ENCODE measurements at regions of chrX and their contacts with region 1.

Region 1: GRCh38 chrX:108224727-108225621 is 133.4 kb downstream of the ATG4A start:
- DNase-seq: no peak
- H3K4me3 ChIP-seq: no peak overlapping the region
- CTCF ChIP-seq: peak; percentile 35

Region 2: DNA sequence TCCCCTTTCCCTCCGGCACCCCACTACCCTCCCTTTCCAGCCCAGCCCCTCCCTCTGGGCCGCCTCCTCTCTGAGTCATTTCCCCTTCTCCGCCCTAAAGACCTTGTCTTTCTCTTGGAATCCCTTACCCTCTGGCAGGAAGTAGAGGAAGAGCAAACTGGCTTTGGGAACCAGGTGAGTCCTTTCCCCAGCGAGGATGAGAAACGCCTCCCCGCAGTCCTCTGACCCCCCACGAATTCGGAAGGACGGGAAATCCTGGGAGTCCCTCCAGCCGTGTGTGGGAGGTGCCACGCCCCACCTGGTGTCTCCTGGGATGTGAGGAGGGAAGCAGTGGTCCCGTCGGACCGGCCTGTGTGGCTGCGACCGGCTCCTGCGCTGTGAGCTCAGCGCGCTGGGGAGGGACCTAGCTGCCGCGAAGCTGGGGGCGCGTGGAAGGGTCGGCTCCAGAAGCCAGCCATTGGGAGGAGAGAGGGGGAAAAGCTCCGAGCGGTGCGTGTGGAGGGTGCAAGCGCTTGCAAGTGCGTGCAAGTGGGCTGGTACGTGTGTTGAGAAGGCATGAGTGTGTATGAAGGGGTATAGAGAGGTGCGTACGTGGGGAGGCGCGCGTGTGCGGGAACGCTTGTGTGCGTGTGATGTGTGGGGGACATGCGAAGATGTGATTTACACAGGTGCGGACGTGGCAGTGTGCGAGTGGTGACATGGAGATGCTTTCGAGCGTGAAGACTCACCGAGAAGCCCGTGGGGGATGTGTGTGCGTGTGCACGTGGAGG is 289.1 kb before region 1 on chrX:
- CTCF ChIA-PET with region 1: no interaction called
- POLR2A ChIA-PET with region 1: no interaction called
- DNase-seq: no peak
- H3K4me3 ChIP-seq: peak overlapping the region; percentile 41
- CTCF ChIP-seq: no peak

Region 3: GRCh38 chrX:108235986-108236385 is 11.0 kb after region 1 on chrX:
- CTCF ChIA-PET with region 1: interaction called, 14 read pairs
- POLR2A ChIA-PET with region 1: no interaction called
- DNase-seq: no peak
- H3K4me3 ChIP-seq: no peak overlapping the region
- CTCF ChIP-seq: no peak

Region 4: DNA sequence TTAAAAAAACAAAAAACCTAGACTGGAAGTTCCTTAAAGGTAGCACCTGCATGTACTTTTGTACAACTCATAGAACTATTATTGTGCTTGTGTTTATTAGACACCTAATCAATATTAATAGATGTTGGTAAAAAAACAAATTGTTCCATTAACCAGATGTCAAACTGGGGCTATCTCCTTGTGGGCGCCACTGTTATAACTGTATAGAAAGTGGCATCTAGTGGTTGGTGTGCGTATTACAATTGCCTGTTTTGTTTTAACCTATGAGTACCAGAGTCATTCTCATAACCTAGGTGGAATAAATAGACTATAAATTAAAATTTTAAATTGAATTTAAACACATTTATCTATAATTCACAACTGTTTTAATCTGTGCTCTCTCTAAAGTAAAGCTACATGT is 312.0 kb after region 1 on chrX:
- CTCF ChIA-PET with region 1: interaction called, 71 read pairs
- POLR2A ChIA-PET with region 1: no interaction called
- DNase-seq: no peak
- H3K4me3 ChIP-seq: no peak overlapping the region
- CTCF ChIP-seq: peak; percentile 48